ENCODE measurements at regions of chr6 and their contacts with region 1.

Region 1: DNA sequence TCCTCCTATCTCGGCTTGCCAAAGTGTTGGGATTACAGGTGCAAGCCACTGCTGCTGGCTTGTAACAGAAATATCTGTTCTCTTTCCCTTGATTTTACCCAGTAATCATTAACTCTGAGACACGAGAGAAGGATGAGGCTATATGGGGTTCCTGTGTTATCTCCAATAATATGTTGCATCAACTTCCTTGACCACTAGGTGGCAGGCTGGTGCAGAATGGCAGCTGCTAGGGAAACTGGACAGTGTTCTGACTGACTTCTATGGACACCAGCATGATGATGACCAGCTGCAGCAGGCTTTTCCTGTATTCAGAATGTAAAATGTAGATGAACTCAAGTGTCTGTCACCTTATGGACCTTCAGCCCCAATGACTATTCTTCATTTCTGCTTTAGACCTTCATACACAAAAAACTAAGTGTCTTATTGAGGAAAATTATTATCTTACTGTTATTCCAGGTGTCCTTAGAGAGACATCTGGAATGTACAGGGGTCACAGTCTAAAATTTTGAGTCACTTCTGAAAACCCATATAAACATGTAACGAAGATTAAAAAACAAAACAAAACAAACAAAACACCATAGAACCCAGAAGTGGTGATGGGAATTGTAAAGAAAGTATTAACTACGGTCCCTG is 20.4 kb upstream of the CD109 start:
- DNase-seq: peak in 1 of 2 experiments; percentile 87
- H3K4me3 ChIP-seq: no peak overlapping the region
- H3K27ac ChIP-seq: no peak overlapping the region
- H3K4me1 ChIP-seq: no peaks in the 10 kb centered on the region
- H3K27me3 ChIP-seq: no peaks in the 10 kb centered on the region
- CTCF ChIP-seq: peak; percentile 75 to 96 (median 87)
- EP300 ChIP-seq: no peak
- POLR2A ChIP-seq: no peak
- RAD21 ChIP-seq: peak; percentile 83 to 89

Region 2: GRCh38 chr6:73644941-73645591 is 30.5 kb before region 1 on chr6:
- CTCF ChIA-PET with region 1: no interaction called
- POLR2A ChIA-PET with region 1: no interaction called
- DNase-seq: no peak
- H3K4me3 ChIP-seq: peak overlapping the region in 2 of 4 experiments; percentile 11 to 49; a peak in 3 of 8 replicates
- H3K27ac ChIP-seq: no peak overlapping the region
- H3K4me1 ChIP-seq: no peaks in the 10 kb centered on the region
- H3K27me3 ChIP-seq: no peaks in the 10 kb centered on the region
- CTCF ChIP-seq: no peak
- EP300 ChIP-seq: no peak
- POLR2A ChIP-seq: no peak
- RAD21 ChIP-seq: no peak

Region 3: GRCh38 chr6:73691512-73691911 is 15.9 kb after region 1 on chr6:
- CTCF ChIA-PET with region 1: interaction called, 26 read pairs
- POLR2A ChIA-PET with region 1: interaction called, 4 read pairs
- DNase-seq: no peak
- H3K4me3 ChIP-seq: no peak overlapping the region
- H3K27ac ChIP-seq: no peak overlapping the region
- H3K4me1 ChIP-seq: peaks cover 0 to 3% (median 0%) of the 10 kb centered on the region in 4 experiments; a peak in 2 of 7 replicates
- H3K27me3 ChIP-seq: peaks cover 0 to 2% (median 0%) of the 10 kb centered on the region in 4 experiments; a peak in 3 of 7 replicates
- CTCF ChIP-seq: no peak
- EP300 ChIP-seq: no peak
- POLR2A ChIP-seq: no peak
- RAD21 ChIP-seq: no peak

Region 4: DNA sequence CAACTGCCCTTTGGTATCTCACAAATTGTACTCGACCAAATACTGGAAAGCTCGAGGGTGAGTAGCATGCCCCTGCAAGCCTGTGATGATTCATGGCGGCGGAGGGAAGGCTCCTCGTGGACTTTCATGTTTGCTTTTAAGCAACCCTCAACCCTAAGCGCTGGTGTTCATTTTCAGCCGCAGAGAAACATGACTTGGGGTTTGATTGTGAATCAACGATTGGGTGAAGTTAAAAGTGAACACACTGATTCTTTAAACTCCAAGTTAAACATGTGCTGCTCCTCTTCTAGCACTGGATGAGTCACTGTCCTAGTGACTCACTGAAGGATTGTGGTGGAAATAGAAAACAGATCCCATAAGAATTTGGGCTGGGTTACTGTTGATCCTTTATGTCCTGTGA is 28.7 kb after region 1 on chr6:
- CTCF ChIA-PET with region 1: interaction called, 15 read pairs
- POLR2A ChIA-PET with region 1: no interaction called
- DNase-seq: no peak
- H3K4me3 ChIP-seq: no peak overlapping the region
- H3K27ac ChIP-seq: no peak overlapping the region
- H3K4me1 ChIP-seq: no peaks in the 10 kb centered on the region
- H3K27me3 ChIP-seq: no peaks in the 10 kb centered on the region
- CTCF ChIP-seq: no peak
- EP300 ChIP-seq: no peak
- POLR2A ChIP-seq: no peak
- RAD21 ChIP-seq: no peak